Head of caudate nucleus (tissue), 42 donors: ENCODE measurements at regions of chr9 and their contacts with region 1.

Region 1: GRCh38 chr9:71806901-71807307 is 38.6 kb upstream of the CEMIP2 start:
- DNase-seq: peak; percentile 9 to 89 (median 71)

Region 2: GRCh38 chr9:71459082-71459481 is 347.8 kb before region 1 on chr9:
- intact Hi-C with region 1: no loop called
- DNase-seq: no peak

Region 3: GRCh38 chr9:71628247-71628646 is 178.7 kb before region 1 on chr9:
- intact Hi-C with region 1: no loop called
- DNase-seq: no peak

Region 4: DNA sequence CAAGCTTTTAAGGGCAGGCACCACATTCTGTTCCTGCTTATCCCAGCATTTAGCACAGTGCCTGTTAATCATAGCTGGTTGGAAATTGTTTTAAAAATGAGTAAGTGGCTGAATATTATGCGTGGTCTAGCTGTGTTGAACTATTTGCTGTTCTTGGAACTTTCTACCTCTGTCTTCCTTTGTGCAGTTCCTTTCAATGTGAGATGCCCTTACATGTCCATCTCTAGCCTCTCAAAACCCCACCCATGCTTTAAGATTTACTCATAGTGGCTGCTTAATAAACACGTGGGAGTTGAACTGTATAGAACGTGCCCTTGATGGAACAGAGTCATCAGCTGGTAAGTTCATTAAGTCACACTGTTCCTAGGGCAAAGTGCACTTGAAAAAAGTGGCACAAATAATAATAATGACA is 219.0 kb after region 1 on chr9:
- intact Hi-C with region 1: loop called (anchors 5 kb)
- DNase-seq: no peak